ENCODE measurements at regions of chr15 and their contacts with region 1.

Region 1: DNA sequence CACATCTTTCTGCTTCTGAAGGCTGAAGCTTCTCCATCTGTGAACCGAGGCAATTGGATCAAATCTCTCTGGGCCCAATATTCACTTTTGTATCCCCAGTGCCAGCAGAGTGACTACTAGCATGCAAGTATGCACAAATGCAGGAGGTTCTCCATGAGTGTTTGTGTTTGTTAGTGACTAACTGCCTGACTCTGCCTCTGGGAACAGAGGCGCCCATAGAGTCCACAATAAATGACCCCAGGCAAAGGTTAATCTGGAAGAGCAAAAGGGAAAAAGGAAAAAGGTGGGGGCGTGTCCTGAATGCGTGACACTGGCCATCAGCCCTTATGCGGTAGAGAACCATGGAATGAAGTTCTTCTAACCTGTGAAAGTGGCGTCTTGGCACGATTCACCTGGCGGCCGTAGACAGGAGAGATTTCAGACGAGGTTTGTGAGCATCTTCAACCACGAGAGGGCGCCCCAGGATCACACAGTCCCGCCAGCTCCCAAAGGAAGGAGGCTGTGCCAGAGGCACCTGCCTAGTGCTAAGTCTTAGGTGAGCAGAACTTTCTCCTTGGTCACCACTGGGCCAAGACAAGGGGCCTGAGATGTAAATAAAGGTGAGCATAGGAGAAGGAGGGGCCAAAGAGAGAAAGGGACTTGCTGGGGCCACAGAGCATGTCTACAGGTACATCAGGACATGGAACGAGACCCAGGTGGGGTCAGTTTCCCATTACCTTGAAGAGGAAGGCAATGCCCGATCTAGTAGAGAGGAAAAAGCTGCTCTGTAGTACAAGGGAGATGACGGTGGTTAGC is 44.2 kb downstream of the RBPMS2 start:
- DNase-seq: peak; percentile 53 to 91 (median 80)
- ATAC-seq: peak; percentile 75 to 88 (median 86)
- H3K4me3 ChIP-seq: no peak overlapping the region
- H3K4me3 Mint-ChIP-seq: no peak overlapping the region
- H3K27ac ChIP-seq: no peak overlapping the region
- H3K27ac Mint-ChIP-seq: no peak overlapping the region
- H3K4me1 ChIP-seq: peaks cover 0 to 10% of the 10 kb centered on the region in 2 experiments
- H3K4me1 Mint-ChIP-seq: peaks cover 8 to 13% (median 11%) of the 10 kb centered on the region in 3 donors
- H3K27me3 ChIP-seq: peaks cover 0 to 26% of the 10 kb centered on the region in 2 experiments
- H3K27me3 Mint-ChIP-seq: peaks cover 0 to 3% of the 10 kb centered on the region in 2 donors

Region 2: GRCh38 chr15:64586259-64586870 is 144.8 kb before region 1 on chr15:
- CTCF ChIA-PET with region 1: no interaction called
- POLR2A ChIA-PET with region 1: no interaction called
- DNase-seq: no peak
- ATAC-seq: no peak
- H3K4me3 ChIP-seq: no peak overlapping the region
- H3K4me3 Mint-ChIP-seq: peak overlapping the region in 1 of 3 donors; percentile 44
- H3K27ac ChIP-seq: no peak overlapping the region
- H3K27ac Mint-ChIP-seq: peak overlapping the region; percentile 69 to 83
- H3K4me1 ChIP-seq: peaks cover 41 to 43% of the 10 kb centered on the region in 2 experiments
- H3K4me1 Mint-ChIP-seq: peaks cover 68 to 77% (median 69%) of the 10 kb centered on the region in 3 donors
- H3K27me3 ChIP-seq: no peaks in the 10 kb centered on the region
- H3K27me3 Mint-ChIP-seq: no peaks in the 10 kb centered on the region

Region 3: DNA sequence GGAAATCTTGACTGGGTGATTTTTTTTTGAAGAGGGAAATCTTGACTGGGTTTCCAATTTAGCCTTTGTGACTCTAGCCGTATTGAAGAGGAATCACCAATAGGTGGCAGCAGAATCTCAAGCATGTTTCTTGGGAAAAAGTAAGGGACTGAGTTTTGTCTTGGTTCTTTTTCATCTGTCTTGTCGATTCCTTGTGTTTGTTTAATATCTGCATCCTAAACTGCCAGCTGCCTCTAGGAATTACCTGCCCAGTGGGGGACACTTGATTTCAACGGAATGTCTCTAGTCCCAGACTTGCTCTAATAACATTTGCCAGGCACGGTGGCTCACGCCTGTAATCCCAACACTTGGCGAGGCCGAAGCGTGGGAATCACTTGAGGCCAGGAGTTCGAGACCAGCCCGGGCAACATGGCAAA is 45.0 kb before region 1 on chr15:
- CTCF ChIA-PET with region 1: interaction called, 17 to 23 read pairs
- POLR2A ChIA-PET with region 1: no interaction called
- DNase-seq: peak in 9 of 35 experiments; percentile 8 to 73 (median 20)
- ATAC-seq: peak in 1 of 4 experiments; percentile 35
- H3K4me3 ChIP-seq: no peak overlapping the region
- H3K4me3 Mint-ChIP-seq: no peak overlapping the region
- H3K27ac ChIP-seq: no peak overlapping the region
- H3K27ac Mint-ChIP-seq: no peak overlapping the region
- H3K4me1 ChIP-seq: no peaks in the 10 kb centered on the region
- H3K4me1 Mint-ChIP-seq: peaks cover 2 to 4% (median 3%) of the 10 kb centered on the region in 3 donors
- H3K27me3 ChIP-seq: no peaks in the 10 kb centered on the region
- H3K27me3 Mint-ChIP-seq: no peaks in the 10 kb centered on the region

Region 4: GRCh38 chr15:64693134-64693533 is 38.1 kb before region 1 on chr15:
- CTCF ChIA-PET with region 1: interaction called, 3 to 17 read pairs
- POLR2A ChIA-PET with region 1: interaction called in 1 of 2 experiments, 3 read pairs
- DNase-seq: no peak
- ATAC-seq: no peak
- H3K4me3 ChIP-seq: no peak overlapping the region
- H3K4me3 Mint-ChIP-seq: no peak overlapping the region
- H3K27ac ChIP-seq: no peak overlapping the region
- H3K27ac Mint-ChIP-seq: peak overlapping the region in 1 of 2 donors; percentile 22
- H3K4me1 ChIP-seq: peaks cover 0 to 5% of the 10 kb centered on the region in 2 experiments
- H3K4me1 Mint-ChIP-seq: peaks cover 30 to 35% (median 32%) of the 10 kb centered on the region in 3 donors
- H3K27me3 ChIP-seq: no peaks in the 10 kb centered on the region
- H3K27me3 Mint-ChIP-seq: no peaks in the 10 kb centered on the region

Region 5: DNA sequence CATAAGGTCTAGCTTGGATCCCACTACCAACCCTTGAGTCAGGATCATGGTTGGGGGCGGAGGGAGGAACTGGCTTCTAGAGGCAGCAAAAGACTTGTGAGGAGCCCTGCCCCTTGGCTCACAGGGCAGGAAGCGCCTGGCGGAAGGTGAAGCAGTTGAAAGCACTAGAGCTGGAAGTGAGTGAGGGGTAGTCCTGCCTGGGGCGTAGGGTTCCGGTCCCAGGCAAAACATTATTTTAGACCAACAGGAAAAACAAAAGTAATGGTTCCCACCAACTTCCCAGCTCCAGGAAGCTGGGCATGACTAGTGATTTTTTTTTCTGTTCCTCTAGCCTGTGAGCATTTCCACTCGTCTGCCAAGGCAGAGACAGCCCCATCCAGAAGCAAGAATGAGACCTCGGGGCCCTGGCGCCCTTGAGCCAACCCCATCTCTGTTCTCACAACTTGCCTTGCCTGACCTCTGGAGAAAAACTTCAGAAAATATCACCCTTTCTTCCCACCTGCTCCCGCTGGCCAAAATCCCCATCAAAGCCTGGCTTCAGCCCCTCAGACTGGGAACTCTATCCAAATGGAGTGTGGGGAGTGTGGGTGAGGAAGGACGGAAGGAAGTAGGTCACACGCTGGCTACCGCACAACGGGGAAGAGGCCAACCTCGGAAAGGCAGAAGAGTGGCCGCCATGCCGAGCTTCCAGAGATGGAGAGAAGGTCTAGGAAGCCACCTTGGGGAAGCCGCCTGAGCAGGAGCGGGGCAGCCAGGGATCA is 13.3 kb before region 1 on chr15:
- CTCF ChIA-PET with region 1: interaction called, 5 to 10 read pairs
- POLR2A ChIA-PET with region 1: interaction called in 1 of 2 experiments, 3 read pairs
- DNase-seq: peak in 13 of 35 experiments; percentile 9 to 43 (median 22)
- ATAC-seq: peak; percentile 80 to 90 (median 84)
- H3K4me3 ChIP-seq: no peak overlapping the region
- H3K4me3 Mint-ChIP-seq: peak overlapping the region in 1 of 3 donors; percentile 48
- H3K27ac ChIP-seq: peak overlapping the region; percentile 20
- H3K27ac Mint-ChIP-seq: peak overlapping the region; percentile 74 to 77
- H3K4me1 ChIP-seq: peaks cover 12 to 20% of the 10 kb centered on the region in 2 experiments
- H3K4me1 Mint-ChIP-seq: peaks cover 15 to 19% (median 16%) of the 10 kb centered on the region in 3 donors
- H3K27me3 ChIP-seq: no peaks in the 10 kb centered on the region
- H3K27me3 Mint-ChIP-seq: no peaks in the 10 kb centered on the region

Region 6: GRCh38 chr15:64766058-64766457 is 34.8 kb after region 1 on chr15:
- CTCF ChIA-PET with region 1: no interaction called
- POLR2A ChIA-PET with region 1: no interaction called
- DNase-seq: no peak
- ATAC-seq: no peak
- H3K4me3 ChIP-seq: no peak overlapping the region
- H3K4me3 Mint-ChIP-seq: no peak overlapping the region
- H3K27ac ChIP-seq: no peak overlapping the region
- H3K27ac Mint-ChIP-seq: no peak overlapping the region
- H3K4me1 ChIP-seq: peaks cover 0 to 3% of the 10 kb centered on the region in 2 experiments
- H3K4me1 Mint-ChIP-seq: peaks cover 0 to 5% (median 0%) of the 10 kb centered on the region in 3 donors
- H3K27me3 ChIP-seq: peaks cover 0 to 5% of the 10 kb centered on the region in 2 experiments
- H3K27me3 Mint-ChIP-seq: peaks cover 2 to 4% of the 10 kb centered on the region in 2 donors

Region 7: DNA sequence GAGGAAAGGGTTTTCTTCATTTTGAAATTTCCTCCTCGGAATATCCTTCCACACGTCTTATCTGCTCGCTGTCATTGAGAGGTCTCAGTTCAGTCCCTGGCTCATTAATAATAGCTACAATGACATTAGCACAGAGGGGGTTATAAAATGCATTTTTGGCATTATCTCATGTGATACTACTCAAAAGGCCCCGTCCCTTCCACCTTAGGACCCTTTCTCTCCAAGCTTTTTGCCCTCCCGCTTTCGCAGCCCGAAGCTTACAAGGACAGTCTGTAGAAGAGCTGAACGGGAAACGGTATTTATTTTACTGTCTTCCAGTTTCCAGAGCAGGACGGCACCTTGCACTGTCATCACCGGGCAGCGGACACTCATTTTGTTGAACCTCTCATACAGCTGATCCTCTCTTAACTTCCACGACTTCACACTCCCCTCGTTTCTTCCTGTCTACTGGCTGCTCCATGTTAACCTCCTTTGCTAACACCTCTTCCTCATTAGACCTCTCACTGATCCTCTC is 104.9 kb after region 1 on chr15:
- CTCF ChIA-PET with region 1: interaction called in 1 of 2 experiments, 3 read pairs
- POLR2A ChIA-PET with region 1: interaction called in 1 of 2 experiments, 13 read pairs
- DNase-seq: no peak
- ATAC-seq: no peak
- H3K4me3 ChIP-seq: no peak overlapping the region
- H3K4me3 Mint-ChIP-seq: peak overlapping the region; percentile 40 to 59 (median 55)
- H3K27ac ChIP-seq: peak overlapping the region; percentile 21
- H3K27ac Mint-ChIP-seq: peak overlapping the region; percentile 73 to 85
- H3K4me1 ChIP-seq: peaks cover 19 to 43% of the 10 kb centered on the region in 2 experiments
- H3K4me1 Mint-ChIP-seq: peaks cover 49 to 58% (median 55%) of the 10 kb centered on the region in 3 donors
- H3K27me3 ChIP-seq: no peaks in the 10 kb centered on the region
- H3K27me3 Mint-ChIP-seq: no peaks in the 10 kb centered on the region

Region 8: GRCh38 chr15:64905119-64905831 is 174.1 kb after region 1 on chr15:
- CTCF ChIA-PET with region 1: interaction called, 4 to 18 read pairs
- POLR2A ChIA-PET with region 1: no interaction called
- DNase-seq: peak; percentile 43 to 83 (median 73)
- ATAC-seq: peak; percentile 69 to 80 (median 76)
- H3K4me3 ChIP-seq: peak overlapping the region in 1 of 2 donors; percentile 30
- H3K4me3 Mint-ChIP-seq: peak overlapping the region; percentile 47 to 72 (median 61)
- H3K27ac ChIP-seq: no peak overlapping the region
- H3K27ac Mint-ChIP-seq: peak overlapping the region; percentile 34 to 66
- H3K4me1 ChIP-seq: peaks cover 11 to 35% of the 10 kb centered on the region in 2 experiments
- H3K4me1 Mint-ChIP-seq: peaks cover 37 to 42% (median 42%) of the 10 kb centered on the region in 3 donors
- H3K27me3 ChIP-seq: peaks cover 0 to 8% of the 10 kb centered on the region in 2 experiments
- H3K27me3 Mint-ChIP-seq: no peaks in the 10 kb centered on the region